Pancreas (tissue), 10 donors: ENCODE measurements at regions of chr12 and their contacts with region 1.

Region 1: DNA sequence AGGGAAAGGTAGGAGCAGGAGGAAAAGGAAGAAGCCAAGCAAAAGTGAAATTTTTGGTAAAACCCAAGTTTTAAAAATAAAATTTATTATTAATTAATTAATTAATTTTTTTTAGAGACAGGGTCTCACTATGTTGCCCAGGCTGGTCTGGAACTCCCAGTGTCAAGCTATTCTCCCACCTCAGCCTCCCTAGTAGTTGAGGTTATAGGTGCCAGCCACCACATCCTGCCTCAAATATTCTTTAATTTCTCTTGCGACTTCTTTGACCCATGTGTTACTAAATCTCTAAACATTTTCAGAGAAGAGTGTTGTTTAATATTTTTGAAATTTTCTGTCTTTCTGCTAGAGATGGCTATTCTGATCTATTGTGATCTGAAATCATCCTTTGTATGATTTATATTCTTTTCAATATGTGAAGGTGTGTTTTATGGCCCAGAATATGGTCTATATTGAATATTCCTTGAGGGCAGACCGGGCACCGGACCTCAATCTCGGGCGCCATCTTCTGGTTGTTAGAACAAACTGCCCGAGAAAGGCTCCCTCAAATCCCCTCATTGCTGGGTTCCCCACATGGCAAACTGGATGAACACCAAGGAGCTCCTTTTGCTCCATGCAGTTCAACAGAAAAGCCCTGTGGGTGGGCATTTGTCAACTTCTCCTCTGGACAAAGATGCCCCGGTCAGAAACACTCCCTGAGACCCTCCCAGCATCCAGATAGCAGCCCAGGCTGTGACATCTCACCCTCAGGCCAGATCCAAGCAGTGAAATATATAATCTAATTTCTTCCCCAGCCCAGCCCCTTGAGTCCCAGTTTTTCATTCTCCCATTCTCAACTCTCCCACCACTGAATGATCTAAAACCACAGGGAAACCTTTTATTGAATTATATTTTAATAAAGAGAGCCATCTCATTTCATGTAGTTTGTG is 110.5 kb downstream of the ASCL4 start:
- DNase-seq: peak in 4 of 6 donors; percentile 17 to 63 (median 40)
- ATAC-seq: peak in 3 of 4 donors; percentile 77 to 90 (median 84)
- H3K4me3 ChIP-seq: no peak overlapping the region
- H3K27ac ChIP-seq: no peak overlapping the region
- H3K4me1 ChIP-seq: no peaks in the 10 kb centered on the region
- H3K27me3 ChIP-seq: no peaks in the 10 kb centered on the region
- CTCF ChIP-seq: peak; percentile 29 to 52 (median 43)

Region 2: GRCh38 chr12:107622005-107622404 is 263.0 kb before region 1 on chr12:
- intact Hi-C with region 1: no loop called
- DNase-seq: no peak
- ATAC-seq: no peak
- H3K4me3 ChIP-seq: no peak overlapping the region
- H3K27ac ChIP-seq: no peak overlapping the region
- H3K4me1 ChIP-seq: no peaks in the 10 kb centered on the region
- H3K27me3 ChIP-seq: peaks cover 0 to 4% (median 0%) of the 10 kb centered on the region in 4 donors
- CTCF ChIP-seq: no peak

Region 3: GRCh38 chr12:107670999-107671643 is 213.9 kb before region 1 on chr12:
- intact Hi-C with region 1: loop called in 2 of 3 experiments (anchors 5 to 10 kb)
- DNase-seq: peak in 1 of 6 donors; percentile 63
- ATAC-seq: peak in 3 of 4 donors; percentile 56 to 75 (median 59)
- H3K4me3 ChIP-seq: no peak overlapping the region
- H3K27ac ChIP-seq: no peak overlapping the region
- H3K4me1 ChIP-seq: no peaks in the 10 kb centered on the region
- H3K27me3 ChIP-seq: peaks cover 0 to 10% (median 0%) of the 10 kb centered on the region in 4 donors
- CTCF ChIP-seq: peak in 3 of 4 donors; percentile 22 to 35 (median 35)

Region 4: DNA sequence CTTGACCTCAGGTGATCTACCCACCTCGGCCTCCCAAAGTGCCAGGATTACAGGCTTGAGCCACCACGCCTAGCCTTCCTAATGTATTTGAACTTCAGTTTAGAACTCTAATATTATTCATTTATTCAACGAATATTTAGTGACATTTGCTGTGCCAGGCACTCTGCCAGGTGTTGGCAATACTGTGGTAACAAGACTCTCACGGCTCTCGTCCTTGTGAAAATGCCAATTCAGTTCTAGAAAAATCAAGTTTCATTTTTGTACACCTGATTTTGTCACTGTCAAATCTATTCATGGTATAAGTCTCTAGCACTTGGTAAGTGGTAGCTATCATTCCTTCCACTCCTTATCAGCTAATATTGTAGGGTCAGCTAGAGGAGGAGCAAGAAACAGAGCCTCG is 205.7 kb before region 1 on chr12:
- intact Hi-C with region 1: loop called in 2 of 3 experiments (anchors 5 to 10 kb)
- DNase-seq: no peak
- ATAC-seq: no peak
- H3K4me3 ChIP-seq: no peak overlapping the region
- H3K27ac ChIP-seq: no peak overlapping the region
- H3K4me1 ChIP-seq: no peaks in the 10 kb centered on the region
- H3K27me3 ChIP-seq: no peaks in the 10 kb centered on the region
- CTCF ChIP-seq: no peak

Region 5: GRCh38 chr12:107748472-107748871 is 136.6 kb before region 1 on chr12:
- intact Hi-C with region 1: no loop called
- DNase-seq: no peak
- ATAC-seq: peak in 2 of 4 donors; percentile 29 to 30
- H3K4me3 ChIP-seq: no peak overlapping the region
- H3K27ac ChIP-seq: no peak overlapping the region
- H3K4me1 ChIP-seq: no peaks in the 10 kb centered on the region
- H3K27me3 ChIP-seq: no peaks in the 10 kb centered on the region
- CTCF ChIP-seq: no peak

Region 6: GRCh38 chr12:108033090-108033489 is 148.1 kb after region 1 on chr12:
- intact Hi-C with region 1: no loop called
- DNase-seq: no peak
- ATAC-seq: no peak
- H3K4me3 ChIP-seq: no peak overlapping the region
- H3K27ac ChIP-seq: no peak overlapping the region
- H3K4me1 ChIP-seq: no peaks in the 10 kb centered on the region
- H3K27me3 ChIP-seq: no peaks in the 10 kb centered on the region
- CTCF ChIP-seq: no peak